Panc1 (cell line): ENCODE measurements at regions of chr14 and their contacts with region 1.

Region 1: GRCh38 chr14:74249433-74250375 is 10.5 kb downstream of the VSX2 start:
- DNase-seq: no peak
- ATAC-seq: no peak
- H3K4me3 ChIP-seq: no peak overlapping the region
- H3K27ac ChIP-seq: no peak overlapping the region
- H3K4me1 ChIP-seq: no peaks in the 10 kb centered on the region
- H3K27me3 ChIP-seq: no peaks in the 10 kb centered on the region
- CTCF ChIP-seq: no peak

Region 2: DNA sequence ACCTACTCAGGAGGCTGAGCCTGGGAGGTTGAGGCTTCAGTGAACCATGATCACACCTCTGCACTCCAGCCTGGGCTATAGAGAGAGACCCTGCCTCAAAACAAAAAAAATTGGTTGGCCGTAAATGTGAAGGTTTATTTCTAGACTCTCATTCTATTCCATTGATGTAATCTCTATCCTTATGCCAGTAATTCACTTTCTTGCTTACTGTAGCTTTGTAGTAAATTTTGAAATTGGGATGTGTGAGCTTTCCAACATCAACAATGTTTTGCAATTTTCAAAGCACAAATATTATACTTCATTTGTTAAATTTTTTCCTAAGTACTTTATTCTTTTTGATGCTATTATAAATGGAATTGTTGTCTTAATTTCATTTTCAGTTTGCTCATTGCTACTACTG is 140.3 kb before region 1 on chr14:
- CTCF ChIA-PET with region 1: interaction called, 3 read pairs
- POLR2A ChIA-PET with region 1: no interaction called
- in situ Hi-C with region 1: no loop called
- intact Hi-C with region 1: loop called (anchors 2 kb)
- DNase-seq: no peak
- ATAC-seq: no peak
- H3K4me3 ChIP-seq: no peak overlapping the region
- H3K27ac ChIP-seq: no peak overlapping the region
- H3K4me1 ChIP-seq: no peaks in the 10 kb centered on the region
- H3K27me3 ChIP-seq: no peaks in the 10 kb centered on the region
- CTCF ChIP-seq: no peak

Region 3: DNA sequence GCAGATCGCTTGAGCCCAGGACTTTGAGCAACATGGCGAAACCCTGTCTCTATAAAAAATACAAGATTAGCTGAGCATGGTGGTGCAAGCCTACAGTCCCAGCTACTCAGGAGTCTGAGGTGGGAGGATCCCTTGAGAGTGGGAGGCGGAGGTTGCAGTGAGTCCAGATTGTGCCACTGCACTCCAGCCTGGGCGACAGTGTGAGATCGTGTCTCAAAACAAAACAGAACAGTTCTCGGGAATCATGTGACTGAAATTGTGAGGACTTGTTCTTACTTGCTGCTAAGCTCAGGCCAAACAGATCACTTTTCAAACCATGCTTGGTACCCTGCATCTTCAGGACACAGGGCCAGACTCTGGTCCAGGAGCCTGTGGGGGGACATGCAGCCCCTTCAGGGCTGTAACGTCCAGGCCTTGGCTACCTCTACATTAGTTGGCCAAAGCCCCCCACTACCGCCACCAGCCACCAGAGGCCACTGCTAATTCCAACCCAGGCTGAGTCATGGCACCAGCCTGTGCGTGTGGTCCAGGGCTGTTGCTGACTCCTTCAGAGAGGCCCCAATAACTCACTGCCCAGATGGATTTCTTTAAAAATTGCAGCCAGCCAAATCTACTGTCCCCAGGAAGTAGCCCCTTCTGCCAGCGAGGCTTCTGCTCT is 209.7 kb after region 1 on chr14:
- CTCF ChIA-PET with region 1: no interaction called
- POLR2A ChIA-PET with region 1: no interaction called
- in situ Hi-C with region 1: no loop called
- intact Hi-C with region 1: no loop called
- DNase-seq: no peak
- ATAC-seq: peak; percentile 84
- H3K4me3 ChIP-seq: no peak overlapping the region
- H3K27ac ChIP-seq: no peak overlapping the region
- H3K4me1 ChIP-seq: no peaks in the 10 kb centered on the region
- H3K27me3 ChIP-seq: no peaks in the 10 kb centered on the region
- CTCF ChIP-seq: peak; percentile 72